Right ventricle myocardium inferior (tissue), 1 donor: ENCODE measurements at regions of chr10 and their contacts with region 1.

Region 1: DNA sequence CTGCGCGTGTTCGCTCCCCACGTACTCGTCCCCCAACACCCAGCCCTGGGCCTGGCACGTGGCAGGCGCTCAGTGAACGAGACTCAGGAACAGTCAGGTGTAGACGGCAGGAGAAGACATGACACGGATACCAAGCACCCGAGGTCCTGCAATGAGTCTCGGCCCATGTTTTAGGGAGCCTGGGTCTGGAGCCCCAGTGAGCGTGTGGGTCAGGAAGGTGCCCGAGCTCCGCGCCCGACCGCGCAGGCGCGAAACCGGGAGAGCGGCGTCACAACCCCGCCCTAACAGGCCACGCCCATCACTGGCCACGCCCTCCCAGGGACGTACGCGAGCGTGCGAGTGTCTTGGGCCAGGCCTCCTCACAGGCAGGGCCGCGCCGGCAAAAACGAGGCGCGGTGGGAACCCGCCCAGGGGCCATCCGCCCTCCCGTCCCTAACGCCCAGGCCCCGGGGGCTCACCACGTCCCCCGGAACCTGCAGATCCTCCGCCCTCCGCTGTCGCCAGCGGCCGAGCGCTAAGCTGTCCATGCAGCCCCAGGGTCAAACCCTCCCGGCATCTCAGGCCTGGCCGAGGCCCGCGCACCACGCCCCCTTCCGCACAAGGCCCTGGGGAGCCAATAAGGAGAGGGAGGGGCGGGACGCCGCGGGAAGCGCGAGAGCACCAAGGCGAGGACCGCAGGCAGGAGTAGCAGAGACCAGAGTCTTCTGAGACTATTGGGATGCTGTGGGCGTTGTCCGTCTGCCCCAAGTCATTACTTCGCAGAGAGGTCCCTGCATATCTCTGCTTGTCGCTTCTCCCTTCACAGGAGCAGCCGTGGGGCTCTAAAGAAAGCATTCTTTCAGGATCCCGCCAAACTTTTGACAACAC is at the start of gene C10orf143:
- DNase-seq: peak; percentile 99
- ATAC-seq: peak; percentile 97
- total RNA-seq, gene C10orf143: 1.4 TPM

Region 2: GRCh38 chr10:129833994-129834739 is 276.3 kb before region 1 on chr10:
- intact Hi-C with region 1: no loop called
- DNase-seq: no peak
- ATAC-seq: no peak

Region 3: DNA sequence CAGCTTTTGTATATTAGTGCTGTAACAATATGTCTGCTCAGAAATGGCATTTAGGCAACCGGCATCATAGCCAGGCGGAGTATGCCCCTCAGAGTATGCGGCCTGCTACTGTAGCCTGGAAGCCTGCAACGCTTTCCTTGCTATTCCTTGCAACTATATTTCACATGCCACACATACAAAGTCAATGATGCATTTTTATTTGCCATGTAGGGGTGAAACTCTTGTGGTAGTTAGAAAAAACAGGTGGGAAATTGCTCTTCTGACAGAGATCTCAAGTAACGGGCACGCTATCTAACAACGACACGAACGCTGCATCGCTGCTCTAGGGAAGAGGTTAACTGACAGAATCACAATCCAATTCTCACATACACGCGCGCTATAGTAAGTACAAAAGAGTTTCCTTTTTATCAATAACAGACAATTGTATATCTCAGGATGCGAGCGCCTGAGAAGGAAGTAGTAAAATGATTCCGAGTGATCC is 152.3 kb before region 1 on chr10:
- intact Hi-C with region 1: no loop called
- DNase-seq: no peak
- ATAC-seq: no peak

Region 4: DNA sequence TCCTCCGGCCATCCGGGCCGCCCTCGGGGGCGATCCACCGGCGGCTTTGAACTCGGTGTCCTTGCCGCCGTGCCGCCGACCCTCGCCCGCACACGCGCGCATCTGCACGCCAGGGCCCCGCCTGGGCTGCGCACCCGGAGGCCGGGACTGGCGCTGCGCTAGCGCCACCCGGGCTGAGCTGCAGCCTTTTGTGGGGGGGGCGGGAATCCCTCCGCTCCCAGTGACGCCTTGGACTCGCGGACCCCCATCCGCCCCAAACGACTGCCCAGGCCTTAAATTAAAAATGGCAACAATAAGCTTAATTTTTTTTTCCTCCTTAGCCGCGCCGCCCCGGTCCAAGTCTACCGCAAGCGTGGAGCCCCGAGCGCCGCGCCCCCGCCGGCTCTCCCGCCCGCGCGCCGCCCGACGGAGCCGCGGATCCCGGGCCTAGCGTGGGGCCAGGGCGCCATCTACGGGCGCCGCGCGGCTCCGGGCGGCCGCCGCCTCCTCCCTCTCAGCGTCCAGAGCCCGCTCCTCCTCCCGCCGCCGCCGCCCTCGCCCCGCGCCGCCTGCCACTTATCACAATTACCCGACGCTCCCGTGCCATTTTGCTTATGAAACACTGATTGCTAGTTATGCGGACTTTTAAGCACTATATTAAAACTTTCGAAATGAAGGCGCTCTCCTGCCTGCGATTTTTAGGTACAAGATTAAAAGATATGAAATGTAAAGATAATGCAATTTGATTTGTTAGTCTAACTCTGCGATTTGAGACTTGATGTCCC is 138.9 kb before region 1 on chr10:
- intact Hi-C with region 1: loop called (anchors 5 kb)
- DNase-seq: peak; percentile 77
- ATAC-seq: peak; percentile 88

Region 5: GRCh38 chr10:130136226-130137089 is 26.0 kb after region 1 on chr10 and contains the start of gene GLRX3:
- intact Hi-C with region 1: loop called (anchors 1 kb)
- DNase-seq: peak; percentile 96
- ATAC-seq: peak; percentile 98
- total RNA-seq, gene GLRX3: 74.3 TPM

Region 6: DNA sequence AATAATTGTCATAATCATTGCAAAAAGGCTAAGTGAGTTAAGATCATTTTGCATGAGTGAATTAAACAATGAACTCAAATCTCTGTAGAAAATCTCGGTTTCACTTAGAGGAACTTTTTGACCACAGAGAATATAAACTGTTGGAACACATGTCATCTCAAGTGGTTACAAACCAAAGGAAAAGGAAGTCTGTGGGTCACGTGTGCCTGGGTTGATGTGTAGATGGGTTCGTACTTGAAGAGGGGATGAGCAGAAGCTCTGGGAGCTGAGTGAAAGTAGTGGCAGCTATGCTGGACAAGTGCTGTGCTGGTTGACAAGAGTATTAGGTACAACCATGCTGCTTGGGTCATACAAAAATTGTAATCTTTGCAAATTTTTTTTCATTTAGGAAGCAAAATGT is 60.7 kb after region 1 on chr10:
- intact Hi-C with region 1: no loop called
- DNase-seq: no peak
- ATAC-seq: no peak

Region 7: DNA sequence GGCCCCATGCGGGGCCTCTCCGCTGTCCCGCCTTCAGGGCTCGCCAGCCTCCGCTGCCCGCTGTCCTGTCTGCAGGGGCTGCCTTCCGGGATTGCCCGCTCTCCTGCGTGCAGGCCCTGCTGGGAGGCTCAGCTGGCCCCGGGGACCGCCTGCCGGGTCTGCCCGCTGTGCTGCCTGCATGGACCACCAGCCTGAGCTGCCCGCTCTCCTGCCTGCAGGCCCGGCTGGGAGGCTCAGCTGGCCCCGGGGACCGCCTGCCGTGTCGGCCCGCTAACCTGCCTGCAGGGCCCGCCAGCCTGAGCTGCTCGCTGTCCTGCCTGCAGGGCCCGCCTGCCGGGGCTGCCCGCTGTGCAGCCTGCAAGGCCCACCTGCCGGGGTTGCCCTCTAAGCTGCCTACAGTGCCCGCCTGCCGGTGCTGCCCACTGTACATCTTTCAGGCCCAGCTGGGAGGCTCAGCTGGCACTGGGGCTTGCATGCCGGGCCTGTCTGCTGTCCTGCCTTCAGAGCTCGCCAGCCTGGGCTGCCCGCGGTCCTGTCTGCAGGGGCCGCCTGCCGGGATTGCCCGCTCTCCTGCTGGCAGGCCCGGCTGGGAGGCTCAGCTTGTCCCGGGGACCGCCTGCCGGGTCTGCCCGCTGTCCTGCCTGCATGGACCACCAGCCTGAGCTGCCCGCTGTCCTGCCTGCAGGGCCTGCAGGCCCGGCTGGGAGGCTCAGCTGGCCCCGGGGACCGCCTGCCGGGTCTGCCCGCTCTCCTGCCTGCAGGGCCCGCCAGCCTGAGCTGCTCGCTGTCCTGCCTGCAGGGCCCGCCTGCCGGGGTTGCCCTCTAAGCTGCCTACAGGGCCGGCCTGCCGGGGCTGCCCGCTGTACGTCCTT is 190.8 kb after region 1 on chr10:
- intact Hi-C with region 1: no loop called
- DNase-seq: peak; percentile 87
- ATAC-seq: peak; percentile 88